Posterior vena cava (tissue), 2 donors: ENCODE measurements at regions of chr7 and their contacts with region 1.

Region 1: DNA sequence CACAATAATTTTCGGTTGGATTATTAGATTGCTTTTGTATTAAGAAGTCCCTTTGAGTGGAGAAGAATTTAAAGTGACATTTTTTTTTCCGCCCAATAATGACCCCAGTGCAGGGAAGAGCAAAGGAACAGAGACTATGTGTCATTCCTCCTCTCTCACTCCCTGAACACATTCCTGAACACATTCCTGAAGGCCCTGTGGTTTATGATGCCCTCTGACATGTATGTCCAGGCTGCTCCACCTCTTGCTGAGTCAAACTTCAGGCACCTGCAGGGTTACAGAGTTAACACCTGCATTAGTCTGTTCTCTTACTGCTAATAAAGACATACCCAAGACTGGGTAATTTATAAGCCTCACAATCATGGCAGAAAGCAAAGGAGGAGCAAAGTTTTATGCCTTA is 704.0 kb upstream of the LRRN3 start:
- DNase-seq: no peak

Region 2: DNA sequence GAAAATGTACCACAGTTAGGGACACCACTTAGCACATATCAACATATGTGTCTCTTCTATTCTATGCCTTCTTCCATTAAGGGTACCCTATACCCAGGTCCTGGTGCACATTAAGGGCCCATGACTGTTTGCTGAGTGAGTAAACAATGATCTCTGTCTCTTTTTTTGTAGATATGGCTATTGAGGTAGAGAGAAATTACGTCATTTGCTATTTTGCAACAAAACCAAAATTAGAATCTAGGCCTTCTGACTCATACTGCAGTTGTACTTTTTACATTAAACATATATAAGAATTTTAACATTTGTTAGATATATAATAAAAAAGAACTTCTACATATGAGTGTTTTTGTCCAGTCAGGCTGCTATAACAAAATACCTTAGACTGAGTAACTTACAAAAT is 20.8 kb after region 1 on chr7:
- intact Hi-C with region 1: loop called in 1 of 2 experiments (anchors 1 kb)
- DNase-seq: no peak

Region 3: DNA sequence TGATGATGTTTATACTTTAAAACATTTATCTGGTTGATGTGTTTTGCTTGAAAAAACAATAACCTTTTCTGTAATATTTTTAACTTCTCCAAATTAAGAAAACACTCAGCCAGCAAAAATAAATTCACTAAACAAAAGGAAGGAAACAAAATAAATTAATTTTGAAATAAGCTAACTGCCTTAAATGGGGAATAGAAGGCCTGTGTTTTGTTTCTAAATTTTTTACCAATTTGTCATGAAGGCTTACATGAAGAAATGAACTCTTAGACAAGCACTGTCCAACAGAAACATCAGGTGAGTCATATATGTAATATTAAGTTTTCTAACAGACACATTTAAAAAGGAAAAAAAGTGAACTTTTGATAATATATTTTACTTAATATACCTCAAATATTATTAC is 772.5 kb after region 1 on chr7:
- intact Hi-C with region 1: no loop called
- DNase-seq: no peak